Ovary (tissue), 10 donors: ENCODE measurements at regions of chr21 and their contacts with region 1.

Region 1: DNA sequence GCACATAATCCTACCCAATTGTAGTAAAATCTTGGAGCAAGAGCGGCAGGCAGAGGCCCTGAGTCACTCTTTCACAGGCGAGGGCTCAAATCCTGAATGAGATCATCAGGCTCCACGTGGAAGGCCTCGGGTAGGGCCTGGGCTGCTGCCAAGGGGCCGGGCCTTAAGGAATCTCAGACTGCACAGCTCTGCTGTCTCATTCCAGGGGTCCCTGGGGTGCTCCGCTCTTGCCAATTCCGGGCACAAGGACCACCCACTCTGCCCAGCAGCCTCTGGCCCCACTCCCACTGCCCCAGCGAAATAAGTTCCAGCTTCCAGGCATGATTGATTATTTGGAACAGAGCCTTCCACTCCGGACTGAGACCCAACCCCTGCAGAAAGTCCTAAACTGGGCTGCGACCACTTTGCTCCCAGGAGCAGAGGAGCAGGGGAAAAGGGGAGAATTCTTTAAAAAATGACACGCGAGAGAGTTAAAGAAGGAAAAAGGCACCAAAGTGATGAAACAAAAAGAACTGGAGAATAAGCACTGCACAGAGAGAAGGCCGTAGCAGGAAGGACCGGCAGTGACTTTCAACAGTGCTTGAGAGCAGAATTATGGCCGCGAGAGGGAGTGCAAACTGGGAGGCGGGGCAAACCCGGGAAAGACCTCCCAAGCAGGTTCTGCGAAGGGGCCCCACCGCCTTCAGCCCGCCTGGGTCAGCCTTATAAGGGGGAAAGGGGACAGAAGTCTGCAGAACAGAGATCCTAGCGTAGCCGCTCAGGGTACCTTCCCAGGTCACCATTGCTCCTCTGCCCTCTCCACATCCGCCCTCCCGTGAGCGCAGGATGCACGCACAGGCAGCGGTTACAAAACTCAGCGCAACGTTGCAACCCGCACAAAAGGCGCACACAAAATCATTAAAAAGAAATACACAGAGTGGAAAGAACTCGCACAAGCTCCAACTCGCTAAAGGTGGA is 2.0 kb downstream of the ADAMTS1 start:
- DNase-seq: peak; percentile 92 to 96 (median 94)
- H3K4me3 ChIP-seq: peak overlapping the region; percentile 87
- H3K27ac ChIP-seq: peak overlapping the region; percentile 96
- H3K4me1 ChIP-seq: peaks cover 9% of the 10 kb centered on the region
- H3K27me3 ChIP-seq: no peaks in the 10 kb centered on the region
- CTCF ChIP-seq: peak; percentile 19 to 43 (median 41)
- EP300 ChIP-seq: peak; percentile 13
- POLR2A ChIP-seq: peak; percentile 26

Region 2: DNA sequence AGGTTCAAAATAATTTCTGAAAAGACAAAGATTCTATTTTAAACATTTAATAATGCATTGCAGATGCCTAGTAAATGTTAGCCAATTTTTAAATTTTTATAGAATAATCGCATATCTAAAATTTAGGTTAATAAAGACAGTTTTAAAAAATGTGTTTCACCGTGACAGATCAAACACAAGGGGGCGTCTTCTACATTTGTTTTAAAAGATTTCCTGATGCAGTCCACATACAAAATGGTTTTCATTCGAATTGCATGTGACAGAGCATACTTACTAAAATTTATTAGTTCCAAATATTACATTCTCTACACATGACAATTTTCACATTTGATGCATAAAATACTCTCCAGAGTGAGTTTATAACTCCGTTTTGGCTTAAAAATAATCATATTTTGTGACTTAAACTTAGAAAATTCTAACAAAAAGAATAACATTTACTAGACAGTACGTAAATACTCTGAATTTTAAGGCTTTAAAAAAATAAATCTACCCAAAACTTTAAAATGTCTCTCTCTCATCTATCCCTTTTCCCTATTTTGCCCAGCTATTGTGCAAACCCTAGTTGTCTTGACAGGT is 73.6 kb before region 1 on chr21:
- intact Hi-C with region 1: loop called in 1 of 4 experiments (anchors 2 kb)
- DNase-seq: no peak
- H3K4me3 ChIP-seq: no peak overlapping the region
- H3K27ac ChIP-seq: no peak overlapping the region
- H3K4me1 ChIP-seq: no peaks in the 10 kb centered on the region
- H3K27me3 ChIP-seq: no peaks in the 10 kb centered on the region
- CTCF ChIP-seq: peak; percentile 57 to 78 (median 70)
- EP300 ChIP-seq: no peak
- POLR2A ChIP-seq: no peak

Region 3: GRCh38 chr21:26788790-26789189 is 54.5 kb before region 1 on chr21:
- intact Hi-C with region 1: loop called in 2 of 4 experiments (anchors 1 to 10 kb)
- DNase-seq: peak; percentile 57 to 82 (median 66)
- H3K4me3 ChIP-seq: no peak overlapping the region
- H3K27ac ChIP-seq: peak overlapping the region; percentile 53 to 74
- H3K4me1 ChIP-seq: peaks cover 11% of the 10 kb centered on the region
- H3K27me3 ChIP-seq: no peaks in the 10 kb centered on the region
- CTCF ChIP-seq: no peak
- EP300 ChIP-seq: peak; percentile 89
- POLR2A ChIP-seq: no peak

Region 4: DNA sequence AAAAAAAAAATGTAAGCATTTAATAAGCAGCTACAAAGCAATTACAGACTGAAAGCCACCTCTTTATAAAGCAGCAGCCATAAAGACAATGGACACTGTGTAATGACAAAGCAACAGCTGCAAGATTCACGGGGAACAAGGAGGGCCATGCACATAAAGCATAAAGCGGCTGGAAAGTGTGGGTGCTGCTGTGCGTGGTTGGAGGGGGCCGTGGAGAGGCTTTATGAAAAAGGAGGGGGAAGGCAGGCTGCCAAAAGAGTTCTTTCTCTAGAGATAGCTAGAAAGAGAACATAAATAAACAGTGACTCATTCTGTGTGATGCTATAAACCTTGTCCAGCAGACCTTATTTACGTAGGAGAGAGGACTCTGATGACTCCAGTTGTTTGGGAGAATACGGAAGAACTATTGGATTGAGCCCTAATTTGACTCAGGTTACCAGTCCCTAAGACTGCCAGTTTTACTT is 47.4 kb before region 1 on chr21:
- intact Hi-C with region 1: loop called in 3 of 4 experiments (anchors 2 to 10 kb)
- DNase-seq: peak; percentile 85 to 96 (median 94)
- H3K4me3 ChIP-seq: no peak overlapping the region
- H3K27ac ChIP-seq: peak overlapping the region; percentile 72 to 77
- H3K4me1 ChIP-seq: peaks cover 18% of the 10 kb centered on the region
- H3K27me3 ChIP-seq: no peaks in the 10 kb centered on the region
- CTCF ChIP-seq: no peak
- EP300 ChIP-seq: peak; percentile 67
- POLR2A ChIP-seq: no peak

Region 5: DNA sequence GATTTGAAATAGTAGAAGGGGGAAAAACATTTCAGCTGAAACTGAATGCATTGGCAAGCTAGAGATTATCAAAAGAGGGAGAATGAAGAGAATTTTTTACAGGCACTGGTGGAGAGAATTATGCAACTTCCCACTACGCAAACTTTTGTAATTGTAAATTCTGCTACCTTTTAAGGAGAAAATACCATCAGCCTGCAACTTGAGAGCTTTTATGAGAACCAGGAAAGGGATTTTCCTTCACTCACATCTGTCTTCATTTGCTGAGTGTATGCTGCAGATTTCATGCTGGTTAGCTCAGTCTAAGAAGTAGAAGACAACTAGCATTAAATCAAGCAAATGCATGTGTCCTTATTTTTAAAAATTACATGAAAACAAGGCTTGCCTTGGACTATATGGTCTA is 41.7 kb before region 1 on chr21:
- intact Hi-C with region 1: loop called in 3 of 4 experiments (anchors 2 to 10 kb)
- DNase-seq: no peak
- H3K4me3 ChIP-seq: no peak overlapping the region
- H3K27ac ChIP-seq: peak overlapping the region; percentile 77 to 78
- H3K4me1 ChIP-seq: peaks cover 20% of the 10 kb centered on the region
- H3K27me3 ChIP-seq: no peaks in the 10 kb centered on the region
- CTCF ChIP-seq: no peak
- EP300 ChIP-seq: no peak
- POLR2A ChIP-seq: peak; percentile 20

Region 6: GRCh38 chr21:27526451-27526850 is 683.2 kb after region 1 on chr21:
- intact Hi-C with region 1: no loop called
- DNase-seq: no peak
- H3K4me3 ChIP-seq: no peak overlapping the region
- H3K27ac ChIP-seq: no peak overlapping the region
- H3K4me1 ChIP-seq: no peaks in the 10 kb centered on the region
- H3K27me3 ChIP-seq: no peaks in the 10 kb centered on the region
- CTCF ChIP-seq: no peak
- EP300 ChIP-seq: no peak
- POLR2A ChIP-seq: no peak

Region 7: DNA sequence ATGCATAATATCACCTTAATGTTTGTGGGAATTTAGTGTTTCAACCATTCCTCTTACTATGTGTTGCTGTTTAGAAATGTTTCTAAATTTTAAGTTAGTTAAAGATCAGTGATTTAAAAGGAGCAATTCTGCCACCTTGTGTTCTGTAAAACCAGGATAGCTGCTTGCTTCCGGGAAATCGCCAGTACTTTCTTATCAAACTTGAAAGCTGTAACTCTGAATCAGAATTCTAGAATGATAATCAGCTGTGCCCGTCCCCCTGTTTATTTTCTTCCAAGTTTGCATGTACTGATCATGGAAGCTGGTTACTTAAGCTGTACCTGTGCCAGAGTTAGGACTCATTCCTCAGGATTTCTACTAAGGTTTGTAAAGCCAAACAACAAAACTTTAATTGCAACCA is 1493.1 kb after region 1 on chr21:
- intact Hi-C with region 1: loop called in 2 of 4 experiments (anchors 5 to 10 kb)
- DNase-seq: peak in 2 of 5 donors; percentile 15 to 39
- H3K4me3 ChIP-seq: no peak overlapping the region
- H3K27ac ChIP-seq: peak overlapping the region in 1 of 2 donors; percentile 12
- H3K4me1 ChIP-seq: peaks cover 3% of the 10 kb centered on the region
- H3K27me3 ChIP-seq: no peaks in the 10 kb centered on the region
- CTCF ChIP-seq: peak; percentile 15 to 56 (median 56)
- EP300 ChIP-seq: no peak
- POLR2A ChIP-seq: no peak

Region 8: GRCh38 chr21:28745131-28746016 is 1902.1 kb after region 1 on chr21:
- intact Hi-C with region 1: loop called in 2 of 4 experiments (anchors 5 to 10 kb)
- DNase-seq: peak; percentile 64 to 80 (median 73)
- H3K4me3 ChIP-seq: peak overlapping the region; percentile 27
- H3K27ac ChIP-seq: peak overlapping the region in 1 of 2 donors; percentile 51
- H3K4me1 ChIP-seq: peaks cover 2% of the 10 kb centered on the region
- H3K27me3 ChIP-seq: no peaks in the 10 kb centered on the region
- CTCF ChIP-seq: peak; percentile 95 to 97 (median 95)
- EP300 ChIP-seq: no peak
- POLR2A ChIP-seq: no peak